ENCODE measurements at regions of chr12 and their contacts with region 1.

Region 1: DNA sequence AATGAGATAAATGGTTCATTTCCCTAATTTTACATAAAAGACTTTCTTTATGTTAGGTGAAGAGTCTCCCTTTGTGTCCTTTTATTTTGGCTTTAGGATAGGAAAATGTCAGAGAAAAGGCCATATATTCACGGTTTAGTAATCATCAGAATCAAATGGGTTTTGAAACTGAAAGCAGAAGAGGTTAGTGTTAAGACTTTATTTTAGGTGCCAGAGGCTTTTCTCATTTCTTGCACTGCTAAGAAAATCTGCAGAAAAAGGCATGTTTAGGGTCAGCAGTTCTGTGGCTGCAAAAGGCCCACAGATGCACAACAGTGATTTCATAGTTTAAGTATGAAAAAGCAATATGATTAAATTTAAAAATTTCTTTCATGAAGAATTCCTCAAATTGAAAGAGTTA is 80.4 kb upstream of the SINHCAF start:
- DNase-seq: no peak
- ATAC-seq: no peak
- H3K4me3 Mint-ChIP-seq: no peak overlapping the region
- H3K27ac Mint-ChIP-seq: no peak overlapping the region
- H3K4me1 Mint-ChIP-seq: no peaks in the 10 kb centered on the region
- H3K27me3 Mint-ChIP-seq: peaks cover 3% of the 10 kb centered on the region

Region 2: DNA sequence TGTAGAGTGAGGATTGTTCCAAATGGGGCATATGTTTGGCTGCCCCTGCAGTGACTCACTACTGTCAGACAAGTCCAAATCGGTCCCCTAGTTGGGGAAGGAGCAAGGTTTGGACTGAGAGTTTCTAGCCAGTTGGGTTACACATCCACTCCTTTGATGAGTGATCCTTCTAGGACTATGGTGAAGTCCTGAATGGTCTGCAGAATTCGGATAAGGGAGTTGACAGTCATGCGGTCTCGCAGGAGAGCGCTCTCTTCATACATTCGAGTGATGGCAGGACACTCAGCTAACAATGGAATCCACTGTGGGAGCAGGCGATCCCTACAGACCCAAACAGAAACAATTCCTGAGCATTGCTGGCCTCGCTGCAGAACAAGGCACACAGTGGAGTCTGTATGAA is 18.9 kb before region 1 on chr12:
- CTCF ChIA-PET with region 1: interaction called, 14 read pairs
- POLR2A ChIA-PET with region 1: no interaction called
- intact Hi-C with region 1: no loop called
- DNase-seq: no peak
- ATAC-seq: no peak
- H3K4me3 Mint-ChIP-seq: no peak overlapping the region
- H3K27ac Mint-ChIP-seq: no peak overlapping the region
- H3K4me1 Mint-ChIP-seq: no peaks in the 10 kb centered on the region
- H3K27me3 Mint-ChIP-seq: peaks cover 1% of the 10 kb centered on the region

Region 3: DNA sequence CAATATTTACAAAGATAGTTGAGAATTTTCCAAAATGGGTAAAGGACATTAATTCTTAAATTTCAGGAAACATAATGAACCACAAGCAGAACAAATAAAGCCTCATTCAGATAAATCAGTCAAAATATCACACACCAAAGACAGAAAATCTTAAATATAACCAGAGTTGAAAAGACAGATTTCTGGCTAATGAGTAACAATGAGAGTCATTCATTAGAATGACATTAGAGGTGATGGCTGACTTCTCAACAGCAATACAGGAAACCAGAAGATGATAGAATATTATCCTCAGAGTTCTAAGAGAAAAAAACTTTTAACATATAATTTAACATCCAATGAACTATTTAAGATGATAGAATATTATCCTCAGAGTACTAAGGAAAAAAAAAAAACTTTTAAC is 60.4 kb after region 1 on chr12:
- CTCF ChIA-PET with region 1: no interaction called
- POLR2A ChIA-PET with region 1: no interaction called
- intact Hi-C with region 1: no loop called
- DNase-seq: no peak
- ATAC-seq: no peak
- H3K4me3 Mint-ChIP-seq: no peak overlapping the region
- H3K27ac Mint-ChIP-seq: no peak overlapping the region
- H3K4me1 Mint-ChIP-seq: no peaks in the 10 kb centered on the region
- H3K27me3 Mint-ChIP-seq: peaks cover 2% of the 10 kb centered on the region

Region 4: DNA sequence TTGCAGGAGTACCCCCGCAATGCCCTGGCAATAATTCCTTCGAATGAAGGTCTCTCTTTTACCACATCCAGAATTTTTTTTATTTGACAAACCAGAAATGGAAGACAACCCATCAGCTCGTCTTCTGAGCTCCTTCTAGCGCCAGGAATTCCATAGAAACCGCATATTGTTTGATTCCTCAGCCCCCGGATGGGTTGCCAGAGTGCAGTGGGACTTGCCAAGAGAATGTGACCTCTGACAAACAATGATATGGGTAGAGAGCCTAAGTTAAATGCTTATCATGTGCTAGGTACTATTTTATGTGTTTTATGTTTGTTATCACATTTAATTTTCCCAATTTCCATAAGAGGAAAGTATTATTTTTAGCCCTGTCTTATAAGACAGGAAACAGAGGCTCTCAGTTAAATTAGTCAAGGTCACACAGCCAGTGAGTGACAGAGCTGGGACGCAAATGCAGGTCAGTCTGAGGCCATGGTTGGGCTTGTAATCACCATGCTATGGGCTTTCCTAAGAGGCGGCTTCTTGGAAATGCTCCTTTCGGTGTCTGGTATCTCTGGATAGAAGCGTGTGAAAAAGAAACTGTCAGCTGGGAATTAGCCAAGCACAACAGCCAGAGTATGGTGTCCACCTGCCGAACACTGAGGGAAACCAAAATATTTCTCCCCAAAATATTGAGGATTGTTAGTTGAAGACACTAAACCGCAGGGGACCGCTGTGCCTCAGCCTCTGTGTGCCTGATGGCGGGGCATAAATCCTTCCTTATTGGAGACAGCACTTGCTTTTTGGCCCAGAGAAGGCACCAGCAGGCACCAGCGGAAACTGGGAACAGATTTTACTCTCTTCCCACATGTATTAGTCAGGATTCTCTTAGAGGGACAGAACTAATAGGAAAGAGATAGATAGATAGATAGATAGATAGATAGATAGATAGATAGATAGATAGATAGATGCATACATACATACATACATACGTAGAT is 223.7 kb after region 1 on chr12:
- CTCF ChIA-PET with region 1: interaction called, 14 read pairs
- POLR2A ChIA-PET with region 1: no interaction called
- intact Hi-C with region 1: no loop called
- DNase-seq: no peak
- ATAC-seq: no peak
- H3K4me3 Mint-ChIP-seq: no peak overlapping the region
- H3K27ac Mint-ChIP-seq: no peak overlapping the region
- H3K4me1 Mint-ChIP-seq: peaks cover 3% of the 10 kb centered on the region
- H3K27me3 Mint-ChIP-seq: no peaks in the 10 kb centered on the region

Region 5: DNA sequence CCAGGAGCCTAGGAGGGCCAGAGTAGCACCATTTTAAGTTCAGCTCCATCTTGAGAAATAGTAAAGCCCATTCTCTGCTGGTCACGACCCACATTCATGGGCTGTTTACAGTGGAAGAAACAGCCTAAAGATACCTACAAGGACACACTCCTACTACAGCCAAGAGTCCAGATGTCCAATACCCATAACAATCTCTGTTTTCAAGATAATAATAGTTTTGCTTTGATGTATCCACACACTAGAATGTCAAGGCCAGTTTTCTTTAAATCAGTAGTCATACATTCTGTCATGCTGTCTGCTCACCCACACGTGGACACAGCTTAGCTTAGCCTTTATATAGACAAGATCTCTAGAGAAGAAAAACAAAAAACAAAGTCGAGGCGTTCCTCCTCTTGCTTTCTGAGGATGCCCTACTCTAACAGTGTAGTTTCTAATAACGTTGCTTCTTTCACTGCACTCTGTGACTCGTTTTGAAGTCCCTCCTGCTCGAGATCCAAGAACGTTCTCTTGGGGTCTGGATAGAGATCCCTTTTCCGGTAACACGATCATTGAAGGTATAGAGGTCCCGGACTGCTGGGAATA is 235.3 kb after region 1 on chr12:
- CTCF ChIA-PET with region 1: interaction called, 14 read pairs
- POLR2A ChIA-PET with region 1: no interaction called
- intact Hi-C with region 1: loop called (anchors 1 kb)
- DNase-seq: no peak
- ATAC-seq: no peak
- H3K4me3 Mint-ChIP-seq: no peak overlapping the region
- H3K27ac Mint-ChIP-seq: no peak overlapping the region
- H3K4me1 Mint-ChIP-seq: peaks cover 1% of the 10 kb centered on the region
- H3K27me3 Mint-ChIP-seq: no peaks in the 10 kb centered on the region

Region 6: GRCh38 chr12:31651893-31652521 is 245.7 kb after region 1 on chr12:
- CTCF ChIA-PET with region 1: interaction called, 13 read pairs
- POLR2A ChIA-PET with region 1: no interaction called
- intact Hi-C with region 1: no loop called
- DNase-seq: no peak
- ATAC-seq: no peak
- H3K4me3 Mint-ChIP-seq: no peak overlapping the region
- H3K27ac Mint-ChIP-seq: peak overlapping the region; percentile 47
- H3K4me1 Mint-ChIP-seq: peaks cover 11% of the 10 kb centered on the region
- H3K27me3 Mint-ChIP-seq: no peaks in the 10 kb centered on the region

Region 7: GRCh38 chr12:31756977-31757420 is 350.7 kb after region 1 on chr12:
- CTCF ChIA-PET with region 1: no interaction called
- POLR2A ChIA-PET with region 1: no interaction called
- intact Hi-C with region 1: no loop called
- DNase-seq: no peak
- ATAC-seq: no peak
- H3K4me3 Mint-ChIP-seq: no peak overlapping the region
- H3K27ac Mint-ChIP-seq: no peak overlapping the region
- H3K4me1 Mint-ChIP-seq: peaks cover 15% of the 10 kb centered on the region
- H3K27me3 Mint-ChIP-seq: no peaks in the 10 kb centered on the region

Region 8: GRCh38 chr12:32302218-32303173 is 896.2 kb after region 1 on chr12:
- CTCF ChIA-PET with region 1: no interaction called
- POLR2A ChIA-PET with region 1: no interaction called
- intact Hi-C with region 1: loop called in 1 of 2 experiments (anchors 5 kb)
- DNase-seq: peak; percentile 37
- ATAC-seq: peak; percentile 66
- H3K4me3 Mint-ChIP-seq: no peak overlapping the region
- H3K27ac Mint-ChIP-seq: no peak overlapping the region
- H3K4me1 Mint-ChIP-seq: no peaks in the 10 kb centered on the region
- H3K27me3 Mint-ChIP-seq: no peaks in the 10 kb centered on the region

Region 9: GRCh38 chr12:32312049-32312670 is 905.8 kb after region 1 on chr12:
- CTCF ChIA-PET with region 1: interaction called, 3 read pairs
- POLR2A ChIA-PET with region 1: no interaction called
- intact Hi-C with region 1: loop called (anchors 5 to 10 kb)
- DNase-seq: no peak
- ATAC-seq: no peak
- H3K4me3 Mint-ChIP-seq: no peak overlapping the region
- H3K27ac Mint-ChIP-seq: no peak overlapping the region
- H3K4me1 Mint-ChIP-seq: peaks cover 2% of the 10 kb centered on the region
- H3K27me3 Mint-ChIP-seq: no peaks in the 10 kb centered on the region